Activated naive CD8-positive, alpha-beta T cell treated with anti-CD3 and anti-CD28 coated beads, Interleukin-2, amount 10 ng/mL, durations not matched to agents 7 days and 5 days (primary cell): ENCODE measurements at regions of chr9 and their contacts with region 1.

Region 1: GRCh38 chr9:132354637-132355355 is at the start of gene SETX:
- DNase-seq: peak; percentile 95
- ATAC-seq: peak; percentile 87
- H3K4me3 Mint-ChIP-seq: peak within 1 kb of the TSS; percentile 92
- H3K27ac Mint-ChIP-seq: peak within 1 kb of the TSS; percentile 93
- H3K4me1 Mint-ChIP-seq: peaks cover 32% of the 10 kb centered on the region
- H3K27me3 Mint-ChIP-seq: peaks cover 2% of the 10 kb centered on the region
- total RNA-seq, gene SETX: 64.0 to 69.4 TPM

Region 2: DNA sequence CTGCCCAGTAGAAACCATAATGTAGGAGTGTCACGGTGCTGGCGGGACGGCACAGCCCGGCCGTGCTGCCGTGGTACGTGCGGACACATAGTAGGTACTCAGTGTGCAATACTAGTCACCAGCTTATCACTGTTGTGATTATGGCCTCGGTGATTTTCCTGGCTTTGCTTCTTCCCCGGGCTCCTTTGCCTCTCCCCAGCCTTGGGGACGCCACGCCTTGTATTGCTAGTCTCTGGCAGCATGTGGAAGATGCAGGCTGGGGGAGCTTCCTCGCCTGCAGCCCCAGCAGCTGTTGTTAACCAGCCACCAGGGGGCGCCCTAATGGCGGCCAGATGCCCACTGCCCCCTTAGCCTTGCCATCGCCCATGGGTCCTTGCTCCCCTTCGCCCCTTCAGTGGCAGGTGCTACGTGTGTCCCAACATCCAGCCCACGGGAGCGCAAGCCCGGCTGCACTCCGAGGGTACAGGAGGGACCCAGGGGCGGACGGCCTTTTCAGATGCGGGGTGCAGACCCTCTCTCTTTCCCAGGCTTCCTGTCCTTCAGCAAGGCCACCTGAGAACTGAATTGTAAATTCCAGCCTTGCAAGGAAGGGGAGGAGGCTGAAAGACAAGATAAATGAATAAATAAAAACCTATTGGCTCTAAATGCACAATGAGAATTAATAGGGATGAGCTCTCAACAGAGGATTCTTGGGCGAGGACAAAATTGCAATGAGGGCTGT is 185.0 kb before region 1 on chr9:
- POLR2A ChIA-PET with region 1: no interaction called
- DNase-seq: peak; percentile 76
- ATAC-seq: peak; percentile 72
- H3K4me3 Mint-ChIP-seq: no peak overlapping the region
- H3K27ac Mint-ChIP-seq: no peak overlapping the region
- H3K4me1 Mint-ChIP-seq: no peaks in the 10 kb centered on the region
- H3K27me3 Mint-ChIP-seq: peaks cover 17% of the 10 kb centered on the region

Region 3: DNA sequence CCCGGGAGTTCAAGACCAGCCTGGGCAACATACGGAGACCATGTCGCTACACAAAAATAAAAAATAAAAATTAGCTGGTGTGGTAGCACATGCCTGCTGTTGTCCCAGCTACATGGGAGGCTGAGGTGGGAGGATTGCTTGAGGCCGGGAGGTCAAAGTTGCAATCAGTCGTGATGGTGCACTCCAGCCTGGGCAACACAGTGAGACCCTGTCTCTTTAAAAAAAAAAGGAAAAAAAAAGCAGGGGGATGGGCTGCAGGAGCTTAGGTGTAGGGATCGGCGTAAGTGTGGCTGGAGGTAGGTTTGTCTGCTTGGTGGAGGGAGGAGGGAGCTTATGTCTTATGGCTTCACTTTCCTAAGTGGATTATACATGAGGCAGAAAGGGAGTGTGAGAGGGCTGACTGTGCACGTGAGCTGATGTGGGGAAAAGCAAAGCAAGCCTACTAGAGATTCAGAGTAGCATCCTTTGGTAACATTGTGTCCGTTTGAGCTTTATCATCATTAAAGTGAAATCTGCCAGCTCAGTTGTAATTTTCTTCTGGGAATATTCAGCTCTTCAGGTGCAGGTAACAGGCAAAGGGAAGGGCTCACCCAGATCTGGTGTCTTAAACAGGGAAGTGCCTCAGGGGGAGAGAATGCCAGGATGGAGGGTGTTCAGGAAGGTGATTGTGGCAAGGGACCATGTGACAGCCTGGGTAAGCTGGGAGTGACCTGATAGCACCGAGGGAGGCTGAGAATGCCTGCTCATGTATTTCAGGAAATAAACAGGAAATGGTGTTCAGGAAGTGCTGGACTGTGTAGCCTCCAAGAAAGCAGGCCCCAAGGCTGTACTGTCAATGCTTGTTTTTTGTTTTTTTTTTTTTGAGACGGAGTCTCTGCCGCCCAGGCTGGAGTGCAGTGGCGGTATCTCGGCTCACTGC is 17.6 kb after region 1 on chr9:
- POLR2A ChIA-PET with region 1: interaction called, 14 read pairs
- DNase-seq: no peak
- ATAC-seq: peak; percentile 66
- H3K4me3 Mint-ChIP-seq: peak overlapping the region; percentile 67
- H3K27ac Mint-ChIP-seq: peak overlapping the region; percentile 88
- H3K4me1 Mint-ChIP-seq: peaks cover 19% of the 10 kb centered on the region
- H3K27me3 Mint-ChIP-seq: no peaks in the 10 kb centered on the region

Region 4: GRCh38 chr9:132404228-132404881 is 49.6 kb after region 1 on chr9:
- POLR2A ChIA-PET with region 1: interaction called, 12 read pairs
- DNase-seq: no peak
- ATAC-seq: peak; percentile 57
- H3K4me3 Mint-ChIP-seq: peak overlapping the region; percentile 80
- H3K27ac Mint-ChIP-seq: peak overlapping the region; percentile 89
- H3K4me1 Mint-ChIP-seq: peaks cover 28% of the 10 kb centered on the region
- H3K27me3 Mint-ChIP-seq: peaks cover under 1% of the 10 kb centered on the region